Calu3 (cell line): ENCODE measurements at regions of chr3 and their contacts with region 1.

Region 1: DNA sequence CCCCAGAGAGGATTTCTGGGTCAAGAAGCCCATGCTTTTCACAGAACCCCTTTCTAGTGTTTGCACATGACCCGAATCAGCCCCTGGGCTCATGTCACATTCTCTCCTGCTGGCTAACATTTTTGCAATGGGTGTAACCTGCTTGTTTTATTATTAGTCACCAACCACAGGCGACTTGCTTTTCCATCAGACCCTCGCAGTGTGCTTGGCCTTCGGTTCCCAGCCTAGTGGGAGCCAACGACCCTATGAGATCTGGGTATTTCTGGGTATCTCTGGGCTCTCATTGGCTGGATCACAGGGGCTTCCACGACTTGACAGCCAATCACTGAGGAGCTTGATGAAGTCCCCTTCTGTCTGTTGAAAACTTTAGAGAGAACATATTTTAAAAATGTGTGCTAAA is 11.0 kb upstream of the FBLN2 start:
- DNase-seq: peak; percentile 72
- H3K4me3 Mint-ChIP-seq: no peak overlapping the region
- H3K27ac Mint-ChIP-seq: peak overlapping the region; percentile 92
- H3K4me1 Mint-ChIP-seq: peaks cover 35% of the 10 kb centered on the region
- H3K27me3 Mint-ChIP-seq: no peaks in the 10 kb centered on the region
- CTCF ChIP-seq: no peak

Region 2: DNA sequence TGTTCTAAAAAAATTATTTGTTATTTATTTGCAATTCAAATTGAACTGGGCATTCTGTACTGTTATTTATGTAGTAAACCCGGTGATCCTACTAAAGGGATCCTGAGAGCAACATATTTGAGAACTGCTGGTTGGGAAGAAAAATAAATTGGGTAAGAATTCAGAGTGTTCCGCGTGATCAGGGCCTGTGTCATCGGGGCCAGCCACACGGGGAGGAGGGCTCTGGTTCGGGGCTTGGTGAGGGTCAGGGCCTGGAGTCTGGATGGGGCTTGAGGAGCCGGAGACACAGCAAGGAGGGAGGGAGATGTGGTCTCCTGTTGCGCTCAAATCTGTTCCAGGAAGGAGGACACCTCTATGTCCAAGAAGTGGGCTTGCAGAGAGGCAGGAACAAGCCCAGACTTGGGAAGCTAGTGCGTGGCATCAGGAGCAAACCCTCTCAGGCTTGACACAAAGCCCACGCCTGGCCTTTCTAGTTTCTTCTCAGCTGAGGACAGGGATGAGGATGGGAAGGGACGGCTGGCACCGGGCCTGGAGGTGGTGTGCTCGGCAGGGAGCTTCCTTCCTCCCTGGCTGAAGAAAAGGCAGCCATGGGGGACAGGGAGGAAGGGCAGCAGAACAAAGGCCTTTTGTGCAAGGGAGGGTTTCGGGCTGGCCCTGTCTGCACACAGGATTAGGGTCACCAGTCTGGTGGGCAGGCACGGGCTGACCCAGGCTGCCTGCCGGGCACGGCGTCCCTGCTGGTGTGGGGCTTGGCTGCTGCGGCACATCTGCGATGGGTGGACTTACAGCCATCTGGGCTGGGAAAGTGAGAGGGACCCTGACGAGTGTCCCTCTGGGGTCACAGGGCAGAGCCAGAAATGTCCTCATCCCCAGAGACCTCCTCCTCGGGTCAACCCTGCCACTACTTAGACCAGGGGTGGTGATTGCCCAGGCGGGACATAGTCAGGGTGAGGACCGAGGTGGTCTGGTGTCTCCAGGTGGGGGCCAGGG is 11.8 kb before region 1 on chr3:
- CTCF ChIA-PET with region 1: no interaction called
- intact Hi-C with region 1: loop called (anchors 2 kb)
- DNase-seq: no peak
- H3K4me3 Mint-ChIP-seq: no peak overlapping the region
- H3K27ac Mint-ChIP-seq: no peak overlapping the region
- H3K4me1 Mint-ChIP-seq: no peaks in the 10 kb centered on the region
- H3K27me3 Mint-ChIP-seq: peaks cover 19% of the 10 kb centered on the region
- CTCF ChIP-seq: no peak